ENCODE measurements at regions of chr19 and their contacts with region 1.

Region 1: DNA sequence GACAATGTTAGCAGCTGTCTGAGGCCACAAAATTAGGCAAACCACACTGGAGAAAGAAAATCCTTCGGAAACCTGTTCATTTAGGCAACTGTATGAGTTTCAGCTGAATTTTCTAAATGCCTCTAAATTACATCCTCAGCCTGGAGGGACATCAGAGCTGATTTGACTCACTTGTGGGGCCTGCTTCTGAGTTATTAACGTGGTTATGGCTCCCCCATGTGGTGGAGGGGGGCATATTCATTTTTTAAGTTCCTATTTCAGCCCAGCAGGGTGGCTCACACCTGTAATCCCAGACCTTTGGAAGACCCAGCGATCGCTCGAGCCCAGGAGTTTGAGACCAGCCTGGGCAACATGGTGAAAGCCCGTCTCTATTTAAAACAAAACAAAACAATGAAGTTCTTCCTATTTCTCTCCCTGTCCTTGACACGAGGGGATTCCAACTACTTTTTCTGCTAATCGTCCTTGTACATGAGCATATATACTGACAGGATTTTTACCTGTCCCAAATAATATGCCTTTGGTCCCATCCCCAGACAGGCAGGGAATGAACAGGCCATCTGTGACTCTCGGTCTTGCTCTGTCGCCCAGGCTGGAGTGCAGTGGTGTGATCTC is 31.5 kb upstream of the HIF3A start:
- DNase-seq: peak; percentile 85
- ATAC-seq: peak; percentile 73
- H3K4me3 Mint-ChIP-seq: no peak overlapping the region
- H3K27ac Mint-ChIP-seq: peak overlapping the region; percentile 17
- H3K4me1 Mint-ChIP-seq: peaks cover 18% of the 10 kb centered on the region
- H3K27me3 Mint-ChIP-seq: peaks cover 49% of the 10 kb centered on the region

Region 2: GRCh38 chr19:46022431-46023310 is 242.7 kb before region 1 on chr19 and contains the start of gene PGLYRP1:
- CTCF ChIA-PET with region 1: interaction called, 72 read pairs
- POLR2A ChIA-PET with region 1: interaction called, 3 read pairs
- DNase-seq: no peak
- ATAC-seq: no peak
- H3K4me3 Mint-ChIP-seq: no peak within 1 kb of the TSS
- H3K27ac Mint-ChIP-seq: no peak within 1 kb of the TSS
- H3K4me1 Mint-ChIP-seq: peaks cover 13% of the 10 kb centered on the region
- H3K27me3 Mint-ChIP-seq: peaks cover 14% of the 10 kb centered on the region
- total RNA-seq, gene PGLYRP1: not detected

Region 3: DNA sequence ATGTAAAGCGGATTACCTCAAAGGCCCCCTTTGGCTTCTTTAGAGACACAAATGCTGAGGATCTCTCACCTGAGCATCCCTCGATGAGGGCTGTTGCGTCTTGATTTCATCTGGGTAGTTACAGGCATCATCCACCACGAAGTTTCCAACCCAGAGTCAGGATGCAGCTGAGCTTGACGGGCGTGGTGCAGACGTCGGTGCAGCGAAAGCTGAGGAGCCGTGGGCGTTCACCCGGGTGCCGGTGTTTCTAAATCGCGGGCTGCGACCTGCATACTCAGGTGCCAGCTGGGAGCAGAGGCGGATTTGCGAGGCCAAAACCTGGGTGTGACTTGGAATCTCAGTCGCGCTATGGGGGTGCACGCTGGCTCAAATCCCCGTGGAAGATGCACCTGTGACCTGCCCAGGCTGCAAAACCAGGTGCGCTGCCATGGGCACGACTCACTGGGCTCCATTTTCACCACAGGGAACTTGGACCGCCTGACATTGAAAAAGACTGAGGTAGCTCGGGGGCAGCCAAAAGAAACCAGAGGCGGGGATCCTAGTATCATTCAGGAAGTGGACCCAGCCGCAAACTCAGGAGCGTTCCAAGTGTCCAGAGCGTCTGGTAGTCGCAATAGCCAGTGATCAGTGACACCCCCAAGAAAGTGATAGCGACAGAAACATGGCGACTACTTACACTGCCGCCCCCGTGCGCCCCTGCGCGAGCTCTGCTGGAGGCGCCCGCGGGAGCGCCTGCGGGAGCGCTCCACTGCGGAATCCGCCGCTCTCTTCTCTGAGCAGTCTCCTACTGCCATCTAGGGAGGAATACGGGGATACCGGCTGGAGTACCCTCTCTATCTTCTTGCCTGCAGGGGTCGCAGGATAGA is 188.1 kb before region 1 on chr19:
- CTCF ChIA-PET with region 1: interaction called, 19 read pairs
- POLR2A ChIA-PET with region 1: no interaction called
- DNase-seq: peak; percentile 39
- ATAC-seq: no peak
- H3K4me3 Mint-ChIP-seq: no peak overlapping the region
- H3K27ac Mint-ChIP-seq: no peak overlapping the region
- H3K4me1 Mint-ChIP-seq: no peaks in the 10 kb centered on the region
- H3K27me3 Mint-ChIP-seq: peaks cover 64% of the 10 kb centered on the region

Region 4: GRCh38 chr19:46283771-46284170 is 18.4 kb after region 1 on chr19:
- CTCF ChIA-PET with region 1: interaction called, 17 read pairs
- POLR2A ChIA-PET with region 1: no interaction called
- DNase-seq: no peak
- ATAC-seq: no peak
- H3K4me3 Mint-ChIP-seq: no peak overlapping the region
- H3K27ac Mint-ChIP-seq: no peak overlapping the region
- H3K4me1 Mint-ChIP-seq: no peaks in the 10 kb centered on the region
- H3K27me3 Mint-ChIP-seq: peaks cover 5% of the 10 kb centered on the region